ENCODE measurements at regions of chr11 and their contacts with region 1.

Region 1: GRCh38 chr11:86047275-86047991 is 21.5 kb downstream of the PICALM start:
- DNase-seq: peak; percentile 81
- H3K4me3 Mint-ChIP-seq: peak overlapping the region; percentile 60
- H3K27ac Mint-ChIP-seq: peak overlapping the region; percentile 99
- H3K4me1 Mint-ChIP-seq: peaks cover 93% of the 10 kb centered on the region
- H3K27me3 Mint-ChIP-seq: no peaks in the 10 kb centered on the region

Region 2: DNA sequence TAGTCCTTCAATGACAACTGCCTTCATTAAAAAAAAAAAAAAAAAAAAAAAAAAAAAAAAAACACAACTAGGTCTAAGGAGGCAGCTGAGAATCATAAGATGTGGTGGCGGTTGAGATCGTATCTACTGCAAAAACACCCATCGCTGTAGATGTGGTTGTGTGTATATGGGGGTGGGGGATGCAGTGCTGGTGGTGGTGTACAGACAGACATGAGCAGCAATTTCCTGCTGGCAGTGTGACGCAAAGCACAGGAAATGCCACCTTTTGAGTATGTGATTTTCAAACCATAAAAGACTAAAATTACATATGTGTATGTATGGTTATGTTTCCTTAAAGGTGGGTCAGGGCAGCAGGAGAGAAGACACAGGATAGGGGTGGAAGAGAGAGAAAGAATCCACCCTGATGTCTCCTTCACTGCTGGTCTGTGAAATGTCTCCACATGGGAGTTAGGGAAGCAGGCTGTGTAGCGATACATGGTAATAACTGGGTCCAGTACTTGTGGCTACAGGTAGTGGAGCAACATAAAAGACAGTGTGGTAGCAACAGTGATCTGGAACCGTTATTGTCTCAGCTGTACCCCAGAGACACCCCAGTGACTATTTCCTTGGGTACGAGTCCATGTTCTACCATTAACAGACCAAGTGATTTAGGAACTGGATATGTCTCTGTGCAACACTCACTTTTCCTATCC is 294.4 kb before region 1 on chr11:
- CTCF ChIA-PET with region 1: no interaction called
- POLR2A ChIA-PET with region 1: no interaction called
- intact Hi-C with region 1: loop called (anchors 2 kb)
- DNase-seq: peak; percentile 94
- H3K4me3 Mint-ChIP-seq: peak overlapping the region; percentile 70
- H3K27ac Mint-ChIP-seq: peak overlapping the region; percentile 96
- H3K4me1 Mint-ChIP-seq: peaks cover 95% of the 10 kb centered on the region
- H3K27me3 Mint-ChIP-seq: peaks cover 3% of the 10 kb centered on the region

Region 3: DNA sequence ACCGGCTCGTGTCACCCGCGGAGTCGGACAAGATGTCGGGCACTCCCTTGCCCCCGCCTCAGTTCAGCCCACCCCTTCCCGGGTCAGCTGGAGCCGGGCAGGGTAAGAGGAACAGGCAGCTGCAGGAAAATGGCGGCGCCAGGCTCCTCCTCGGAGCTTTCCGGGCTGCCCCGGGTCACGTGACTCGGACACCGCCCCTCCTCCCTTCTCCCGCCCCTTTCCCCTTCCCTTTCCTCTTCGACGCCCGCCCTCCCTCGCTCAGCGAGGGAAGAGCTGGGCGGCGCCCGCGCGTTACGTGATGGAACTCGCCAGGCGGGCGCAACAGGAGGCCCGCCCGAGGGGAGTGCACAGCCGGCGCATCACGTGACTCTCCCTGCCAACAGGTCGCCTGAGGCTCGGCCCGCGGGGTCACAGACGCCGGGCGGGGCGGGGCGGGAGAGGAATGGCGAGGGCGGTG is 21.5 kb after region 1 on chr11 and contains the start of gene PICALM:
- CTCF ChIA-PET with region 1: interaction called, 20 read pairs
- POLR2A ChIA-PET with region 1: interaction called, 10 read pairs
- intact Hi-C with region 1: loop called (anchors 1 kb)
- DNase-seq: peak; percentile 99
- H3K4me3 Mint-ChIP-seq: peak within 1 kb of the TSS; percentile 96
- H3K27ac Mint-ChIP-seq: peak within 1 kb of the TSS; percentile 88
- H3K4me1 Mint-ChIP-seq: peaks cover 25% of the 10 kb centered on the region
- H3K27me3 Mint-ChIP-seq: no peaks in the 10 kb centered on the region
- total RNA-seq, gene PICALM: 75.9 to 90.4 TPM

Region 4: GRCh38 chr11:86138958-86139357 is 91.5 kb after region 1 on chr11:
- CTCF ChIA-PET with region 1: no interaction called
- POLR2A ChIA-PET with region 1: no interaction called
- intact Hi-C with region 1: loop called (anchors 1 kb)
- DNase-seq: peak; percentile 61
- H3K4me3 Mint-ChIP-seq: peak overlapping the region; percentile 20
- H3K27ac Mint-ChIP-seq: peak overlapping the region; percentile 70
- H3K4me1 Mint-ChIP-seq: peaks cover 45% of the 10 kb centered on the region
- H3K27me3 Mint-ChIP-seq: no peaks in the 10 kb centered on the region

Region 5: DNA sequence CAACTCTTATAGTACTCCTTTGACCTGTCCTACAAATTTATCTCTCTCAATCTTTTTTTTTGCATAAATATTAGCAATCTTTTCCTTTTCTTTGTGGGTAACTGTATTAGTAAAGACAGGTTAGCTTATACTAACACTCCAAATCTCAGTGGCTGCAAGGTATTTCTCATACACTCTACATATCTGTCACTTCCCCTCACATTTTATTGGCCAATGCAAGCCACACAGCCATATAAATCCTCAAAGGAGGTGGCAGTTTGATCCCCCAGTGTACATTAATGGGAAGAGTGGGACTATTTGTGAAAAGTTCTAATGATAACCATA is 154.5 kb after region 1 on chr11:
- CTCF ChIA-PET with region 1: interaction called, 12 read pairs
- POLR2A ChIA-PET with region 1: interaction called, 3 read pairs
- intact Hi-C with region 1: loop called (anchors 1 kb)
- DNase-seq: peak; percentile 38
- H3K4me3 Mint-ChIP-seq: no peak overlapping the region
- H3K27ac Mint-ChIP-seq: no peak overlapping the region
- H3K4me1 Mint-ChIP-seq: peaks cover 5% of the 10 kb centered on the region
- H3K27me3 Mint-ChIP-seq: no peaks in the 10 kb centered on the region

Region 6: GRCh38 chr11:86255896-86256295 is 208.5 kb after region 1 on chr11:
- CTCF ChIA-PET with region 1: interaction called, 8 read pairs
- POLR2A ChIA-PET with region 1: interaction called, 3 read pairs
- intact Hi-C with region 1: loop called (anchors 1 kb)
- DNase-seq: no peak
- H3K4me3 Mint-ChIP-seq: no peak overlapping the region
- H3K27ac Mint-ChIP-seq: peak overlapping the region; percentile 68
- H3K4me1 Mint-ChIP-seq: peaks cover 56% of the 10 kb centered on the region
- H3K27me3 Mint-ChIP-seq: no peaks in the 10 kb centered on the region